ENCODE measurements at regions of chr20 and their contacts with region 1.

Region 1: GRCh38 chr20:3612795-3613572 is 50.2 kb downstream of the GFRA4 start:
- DNase-seq: peak; percentile 13
- ATAC-seq: no peak
- H3K4me3 ChIP-seq: no peak overlapping the region
- H3K27ac ChIP-seq: no peak overlapping the region
- H3K4me1 ChIP-seq: peaks cover 24% of the 10 kb centered on the region
- H3K27me3 ChIP-seq: no peaks in the 10 kb centered on the region
- CTCF ChIP-seq: peak; percentile 44

Region 2: DNA sequence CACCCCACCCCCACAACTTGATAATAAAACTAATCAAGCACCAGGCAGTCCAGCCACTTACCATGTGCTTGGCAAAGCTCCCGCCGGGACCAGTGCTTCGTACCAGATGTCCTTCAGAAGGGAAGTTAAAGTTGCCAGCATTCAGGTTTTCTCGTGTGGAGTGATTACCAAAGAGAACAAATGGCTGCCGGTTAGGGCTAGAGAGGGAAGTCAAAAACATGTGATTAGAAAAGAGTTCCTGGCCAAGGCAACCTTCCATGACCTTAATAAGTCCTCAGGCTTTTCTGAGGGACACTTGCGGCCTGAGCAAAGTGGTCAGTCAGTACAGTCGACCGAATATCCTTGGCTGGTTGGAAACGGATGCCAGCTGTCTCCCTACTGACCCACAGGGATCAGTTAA is 272.5 kb before region 1 on chr20:
- CTCF ChIA-PET with region 1: interaction called, 13 read pairs
- POLR2A ChIA-PET with region 1: no interaction called
- intact Hi-C with region 1: no loop called
- DNase-seq: no peak
- ATAC-seq: no peak
- H3K4me3 ChIP-seq: no peak overlapping the region
- H3K27ac ChIP-seq: no peak overlapping the region
- H3K4me1 ChIP-seq: peaks cover 4% of the 10 kb centered on the region; the same call in 1 of the 2 replicates
- H3K27me3 ChIP-seq: no peaks in the 10 kb centered on the region
- CTCF ChIP-seq: no peak

Region 3: DNA sequence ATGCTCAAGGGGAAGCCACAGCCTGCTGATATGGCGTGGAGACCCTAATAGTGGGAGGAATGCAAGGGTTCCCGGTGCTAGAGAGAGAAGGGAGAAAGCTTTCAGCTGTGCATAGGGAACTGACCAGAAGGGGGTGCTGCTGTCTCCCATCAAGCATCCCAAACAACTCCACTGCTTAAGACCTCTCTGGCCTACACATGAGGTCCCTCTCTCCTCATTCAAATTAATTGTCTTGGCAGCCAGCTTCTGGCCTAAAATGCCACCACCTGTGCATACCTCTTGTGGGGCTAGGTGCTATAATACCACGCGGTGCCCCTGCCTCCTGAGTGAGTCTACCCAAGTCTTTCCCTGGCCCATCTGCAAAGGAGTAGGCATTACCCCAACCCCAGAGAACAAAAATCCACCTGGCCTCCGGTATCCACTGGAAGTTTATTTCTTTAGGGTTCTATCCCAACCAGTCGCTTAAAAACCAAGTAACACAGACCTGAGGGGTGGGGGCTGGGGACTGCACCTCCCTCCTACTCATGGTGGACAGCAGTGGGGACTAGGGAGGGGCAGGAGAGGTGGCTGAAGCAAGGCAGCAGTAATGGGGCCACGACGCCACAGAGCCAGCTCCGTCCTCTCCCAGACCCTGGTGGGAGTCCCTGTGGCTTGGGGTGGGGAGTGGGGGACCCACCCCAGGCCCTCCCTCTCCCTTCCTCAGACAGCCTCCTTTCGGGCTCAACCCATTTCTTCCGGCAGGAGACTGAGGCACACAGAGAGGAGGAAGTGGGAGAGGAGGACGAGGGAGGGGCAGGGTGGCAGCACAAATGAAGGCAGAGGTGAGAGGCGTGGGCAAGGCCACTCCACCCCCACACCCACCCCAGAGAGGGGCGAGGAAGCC is 140.4 kb after region 1 on chr20:
- CTCF ChIA-PET with region 1: no interaction called
- POLR2A ChIA-PET with region 1: no interaction called
- intact Hi-C with region 1: no loop called
- DNase-seq: peak; percentile 68
- ATAC-seq: peak; percentile 80
- H3K4me3 ChIP-seq: no peak overlapping the region
- H3K27ac ChIP-seq: no peak overlapping the region
- H3K4me1 ChIP-seq: no peaks in the 10 kb centered on the region
- H3K27me3 ChIP-seq: no peaks in the 10 kb centered on the region
- CTCF ChIP-seq: peak; percentile 88

Region 4: GRCh38 chr20:3786665-3787323 is 173.8 kb after region 1 on chr20 and contains the start of gene CENPB:
- CTCF ChIA-PET with region 1: no interaction called
- POLR2A ChIA-PET with region 1: no interaction called
- intact Hi-C with region 1: no loop called
- DNase-seq: peak; percentile 94
- ATAC-seq: peak; percentile 76
- H3K4me3 ChIP-seq: peak within 1 kb of the TSS; percentile 77
- H3K27ac ChIP-seq: peak within 1 kb of the TSS; percentile 55
- H3K4me1 ChIP-seq: peaks cover 36% of the 10 kb centered on the region
- H3K27me3 ChIP-seq: no peaks in the 10 kb centered on the region
- CTCF ChIP-seq: peak; percentile 73
- total RNA-seq, gene CENPB: 213 and 276 TPM in 2 replicates